ENCODE measurements at regions of chr16 and their contacts with region 1.

Region 1: DNA sequence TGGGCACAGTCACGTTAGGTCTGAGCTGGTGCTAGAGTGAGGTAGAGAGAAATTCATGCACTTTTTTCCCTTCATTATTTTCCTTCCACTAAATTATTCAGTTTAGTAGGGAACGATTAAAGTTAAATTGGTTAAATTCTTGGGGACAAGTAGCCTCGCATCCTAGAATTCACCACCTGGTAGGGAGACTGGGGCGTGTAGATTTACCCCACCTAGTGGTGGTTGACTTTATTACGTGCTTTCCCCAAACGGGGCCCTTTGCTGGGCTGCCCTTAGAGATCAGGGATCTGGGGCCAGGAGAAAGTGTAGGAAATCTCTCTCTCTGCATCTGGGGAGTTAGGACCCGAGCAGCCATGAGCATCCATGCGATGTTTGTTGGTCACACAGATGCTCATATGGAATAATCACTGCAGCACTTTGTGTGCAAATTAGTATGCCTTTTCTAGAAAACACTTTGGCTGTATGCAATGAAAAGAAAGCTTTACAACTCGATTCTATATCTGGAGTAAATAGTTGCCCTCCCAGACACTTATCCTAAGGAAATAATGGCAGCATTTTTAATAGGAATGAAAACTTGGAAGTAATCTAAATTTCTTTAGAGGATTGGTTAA is 107.0 kb downstream of the PLCG2 start:
- DNase-seq: peak; percentile 50
- H3K4me3 ChIP-seq: no peak overlapping the region
- H3K27ac ChIP-seq: no peak overlapping the region
- H3K4me1 ChIP-seq: no peaks in the 10 kb centered on the region
- H3K27me3 ChIP-seq: no peaks in the 10 kb centered on the region
- CTCF ChIP-seq: peak; percentile 74

Region 2: DNA sequence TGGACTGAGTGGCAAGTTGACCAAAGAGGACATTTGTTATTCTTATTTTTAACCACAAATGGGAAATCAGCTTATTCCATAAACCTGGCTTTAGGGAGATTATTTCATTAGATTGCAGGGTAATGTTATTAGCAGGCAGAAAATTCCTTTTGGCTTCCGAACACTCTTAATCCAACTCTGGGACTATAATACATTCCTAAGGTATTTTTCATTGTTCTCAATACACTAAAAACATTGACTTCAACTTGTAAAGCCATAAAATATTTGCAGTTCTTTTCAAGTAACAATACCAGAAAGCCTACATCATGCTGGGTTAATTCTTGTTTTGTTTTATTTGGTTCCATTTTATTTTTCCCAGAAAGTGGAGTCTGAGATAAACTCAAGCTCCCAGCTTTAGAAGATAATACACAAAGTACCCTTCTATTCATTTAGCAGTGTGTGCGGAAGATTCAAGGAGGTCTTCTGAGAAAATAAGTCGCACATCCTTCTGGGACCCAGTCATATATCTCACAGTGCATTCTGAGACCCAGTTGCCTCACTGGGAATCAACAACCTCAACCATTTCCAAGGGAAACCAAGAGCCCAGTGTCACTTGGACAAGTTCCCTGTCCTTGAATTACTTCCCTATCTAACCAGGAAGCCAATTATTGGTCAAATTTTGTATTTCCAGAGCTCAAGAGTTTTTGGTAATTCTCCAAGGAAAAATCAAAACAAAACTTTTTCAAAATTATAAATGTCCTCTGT is 1734.9 kb before region 1 on chr16:
- CTCF ChIA-PET with region 1: interaction called, 16 read pairs
- POLR2A ChIA-PET with region 1: no interaction called
- intact Hi-C with region 1: no loop called
- DNase-seq: no peak
- H3K4me3 ChIP-seq: no peak overlapping the region
- H3K27ac ChIP-seq: no peak overlapping the region
- H3K4me1 ChIP-seq: no peaks in the 10 kb centered on the region
- H3K27me3 ChIP-seq: no peaks in the 10 kb centered on the region
- CTCF ChIP-seq: no peak

Region 3: DNA sequence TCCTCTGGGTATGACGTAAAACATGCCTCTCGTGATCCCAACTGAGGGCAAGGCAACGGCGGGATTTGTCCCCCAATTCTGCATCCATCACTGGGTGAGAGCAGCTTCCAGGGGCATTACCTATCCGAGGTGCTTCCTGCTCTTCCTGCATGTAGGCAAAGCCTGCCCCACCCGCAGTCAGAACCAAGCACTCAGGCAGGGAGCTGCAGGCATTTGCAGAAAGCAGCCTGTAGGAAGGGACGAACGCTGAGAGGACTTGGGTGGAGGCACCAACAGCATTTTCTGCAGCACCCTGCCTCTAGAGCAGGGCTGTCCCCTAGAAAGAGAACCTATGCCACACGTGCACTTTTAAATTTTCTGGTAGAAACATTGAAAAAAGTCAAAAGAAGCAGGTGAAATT is 642.1 kb before region 1 on chr16:
- CTCF ChIA-PET with region 1: no interaction called
- POLR2A ChIA-PET with region 1: no interaction called
- intact Hi-C with region 1: no loop called
- DNase-seq: no peak
- H3K4me3 ChIP-seq: no peak overlapping the region
- H3K27ac ChIP-seq: no peak overlapping the region
- H3K4me1 ChIP-seq: peaks cover 9% of the 10 kb centered on the region
- H3K27me3 ChIP-seq: no peaks in the 10 kb centered on the region
- CTCF ChIP-seq: no peak

Region 4: GRCh38 chr16:81905277-81905676 is 19.2 kb after region 1 on chr16:
- CTCF ChIA-PET with region 1: no interaction called
- POLR2A ChIA-PET with region 1: no interaction called
- intact Hi-C with region 1: no loop called
- DNase-seq: no peak
- H3K4me3 ChIP-seq: no peak overlapping the region
- H3K27ac ChIP-seq: no peak overlapping the region
- H3K4me1 ChIP-seq: no peaks in the 10 kb centered on the region
- H3K27me3 ChIP-seq: no peaks in the 10 kb centered on the region
- CTCF ChIP-seq: no peak

Region 5: GRCh38 chr16:82229796-82230619 is 343.9 kb after region 1 on chr16:
- CTCF ChIA-PET with region 1: interaction called, 5 read pairs
- POLR2A ChIA-PET with region 1: no interaction called
- intact Hi-C with region 1: loop called (anchors 1 kb)
- DNase-seq: peak; percentile 84
- H3K4me3 ChIP-seq: no peak overlapping the region
- H3K27ac ChIP-seq: no peak overlapping the region
- H3K4me1 ChIP-seq: no peaks in the 10 kb centered on the region
- H3K27me3 ChIP-seq: no peaks in the 10 kb centered on the region
- CTCF ChIP-seq: peak; percentile 93